Psoas muscle (tissue), 8 donors: ENCODE measurements at regions of chr1 and their contacts with region 1.

Region 1: GRCh38 chr1:114641377-114641776 is 28.5 kb downstream of the DENND2C start:
- DNase-seq: no peak
- ATAC-seq: peak in 3 of 4 donors; percentile 57 to 69 (median 58)
- H3K4me3 ChIP-seq: no peak overlapping the region
- H3K27ac ChIP-seq: peak overlapping the region; percentile 49
- H3K4me1 ChIP-seq: no peaks in the 10 kb centered on the region
- H3K27me3 ChIP-seq: no peaks in the 10 kb centered on the region
- CTCF ChIP-seq: no peak

Region 2: DNA sequence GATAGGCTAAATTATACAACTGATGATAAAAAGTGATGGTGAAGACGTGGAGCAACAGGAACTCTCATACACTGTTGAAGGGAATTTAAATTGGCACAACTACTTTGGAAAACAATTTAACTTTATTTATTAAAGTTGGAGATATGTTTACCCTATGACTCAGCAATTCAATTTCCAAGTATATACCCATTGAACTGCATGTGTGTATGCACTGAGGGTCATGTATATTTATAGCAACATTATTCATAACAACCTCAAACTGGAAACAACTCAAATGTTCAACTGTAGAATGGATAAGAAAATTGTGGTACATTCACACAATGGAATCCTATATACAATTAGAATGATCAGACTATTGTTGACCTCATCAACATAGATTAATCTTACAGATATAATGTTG is 43.4 kb before region 1 on chr1:
- intact Hi-C with region 1: loop called in 1 of 2 experiments (anchors 5 kb)
- DNase-seq: no peak
- ATAC-seq: peak; percentile 80 to 92 (median 82)
- H3K4me3 ChIP-seq: no peak overlapping the region
- H3K27ac ChIP-seq: peak overlapping the region; percentile 79
- H3K4me1 ChIP-seq: peaks cover 11% of the 10 kb centered on the region
- H3K27me3 ChIP-seq: no peaks in the 10 kb centered on the region
- CTCF ChIP-seq: no peak